ENCODE measurements at regions of chr3 and their contacts with region 1.

Region 1: GRCh38 chr3:42547401-42547945 is 34.3 kb downstream of the SEC22C start:
- DNase-seq: peak; percentile 60 to 68
- H3K4me3 ChIP-seq: no peak overlapping the region
- H3K27ac ChIP-seq: no peak overlapping the region
- H3K4me1 ChIP-seq: peaks cover 12 to 21% of the 10 kb centered on the region in 2 donors
- H3K27me3 ChIP-seq: no peaks in the 10 kb centered on the region
- CTCF ChIP-seq: peak; percentile 65 to 98 (median 71)
- POLR2A ChIP-seq: no peak

Region 2: GRCh38 chr3:41327718-41328117 is 1219.8 kb before region 1 on chr3:
- intact Hi-C with region 1: no loop called
- DNase-seq: no peak
- H3K4me3 ChIP-seq: no peak overlapping the region
- H3K27ac ChIP-seq: no peak overlapping the region
- H3K4me1 ChIP-seq: peaks cover 14 to 33% of the 10 kb centered on the region in 2 donors
- H3K27me3 ChIP-seq: no peaks in the 10 kb centered on the region
- CTCF ChIP-seq: no peak
- POLR2A ChIP-seq: no peak

Region 3: GRCh38 chr3:42256135-42256819 is 291.2 kb before region 1 on chr3:
- intact Hi-C with region 1: loop called (anchors 10 kb)
- DNase-seq: no peak
- H3K4me3 ChIP-seq: no peak overlapping the region
- H3K27ac ChIP-seq: no peak overlapping the region
- H3K4me1 ChIP-seq: no peaks in the 10 kb centered on the region
- H3K27me3 ChIP-seq: no peaks in the 10 kb centered on the region
- CTCF ChIP-seq: no peak
- POLR2A ChIP-seq: no peak

Region 4: GRCh38 chr3:42502429-42503250 is 44.8 kb before region 1 on chr3 and contains the start of gene VIPR1:
- intact Hi-C with region 1: loop called (anchors 2 kb)
- DNase-seq: peak; percentile 92 to 93
- H3K4me3 ChIP-seq: peak within 1 kb of the TSS; percentile 7 to 44 (median 43)
- H3K27ac ChIP-seq: peak within 1 kb of the TSS in 1 of 3 donors; percentile 25
- H3K4me1 ChIP-seq: peaks cover 9 to 22% of the 10 kb centered on the region in 2 donors
- H3K27me3 ChIP-seq: no peaks in the 10 kb centered on the region
- CTCF ChIP-seq: no peak
- POLR2A ChIP-seq: peak in 1 of 2 donors; percentile 83
- total RNA-seq, gene VIPR1: 6.3 to 117 (median 26.0) TPM

Region 5: DNA sequence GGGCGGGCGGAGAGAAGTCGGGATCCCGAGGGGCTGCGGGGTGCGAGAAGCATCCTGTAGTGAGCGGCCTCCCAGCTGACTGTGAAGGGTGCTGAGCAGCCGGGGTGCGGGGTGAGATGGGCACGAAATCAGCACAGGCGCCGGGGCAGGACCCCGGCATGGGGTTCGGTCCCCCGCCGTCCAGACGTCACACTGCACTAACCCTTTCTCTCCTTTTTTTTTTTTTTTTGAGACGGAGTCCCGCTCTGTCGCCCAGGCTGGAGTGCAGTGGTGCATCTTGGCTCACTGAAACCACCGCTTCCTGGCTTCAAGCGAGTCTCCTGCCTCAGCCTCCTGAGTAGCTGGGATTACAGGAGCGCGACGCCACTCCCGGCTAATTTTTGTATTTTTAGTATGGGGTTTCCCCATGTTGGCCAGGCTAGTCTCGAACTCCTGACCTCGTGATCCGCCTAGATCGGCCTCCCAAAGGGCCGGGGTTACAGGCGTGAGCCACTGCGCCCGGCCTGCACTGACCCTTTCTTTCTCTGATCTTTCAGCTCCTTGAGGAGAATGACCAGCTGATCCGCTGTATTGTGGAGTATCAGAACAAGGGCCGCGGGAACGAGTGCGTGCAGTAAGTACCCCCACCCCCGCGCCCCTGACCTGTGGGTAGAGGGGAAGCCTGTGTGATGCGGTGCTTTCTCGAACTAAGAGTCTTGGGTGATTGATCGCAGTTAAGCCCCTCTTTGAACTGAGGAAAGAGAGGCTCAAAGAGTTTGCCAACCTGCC is 43.7 kb after region 1 on chr3:
- intact Hi-C with region 1: no loop called
- DNase-seq: peak in 1 of 2 donors; percentile 39
- H3K4me3 ChIP-seq: peak overlapping the region in 2 of 3 donors; percentile 59
- H3K27ac ChIP-seq: peak overlapping the region; percentile 68 to 73 (median 73)
- H3K4me1 ChIP-seq: peaks cover 12 to 16% of the 10 kb centered on the region in 2 donors
- H3K27me3 ChIP-seq: no peaks in the 10 kb centered on the region
- CTCF ChIP-seq: no peak
- POLR2A ChIP-seq: no peak

Measured in thyroid gland (tissue), 4 donors.